HEK293 (cell line): ENCODE measurements at regions of chr6 and their contacts with region 1.

Region 1: DNA sequence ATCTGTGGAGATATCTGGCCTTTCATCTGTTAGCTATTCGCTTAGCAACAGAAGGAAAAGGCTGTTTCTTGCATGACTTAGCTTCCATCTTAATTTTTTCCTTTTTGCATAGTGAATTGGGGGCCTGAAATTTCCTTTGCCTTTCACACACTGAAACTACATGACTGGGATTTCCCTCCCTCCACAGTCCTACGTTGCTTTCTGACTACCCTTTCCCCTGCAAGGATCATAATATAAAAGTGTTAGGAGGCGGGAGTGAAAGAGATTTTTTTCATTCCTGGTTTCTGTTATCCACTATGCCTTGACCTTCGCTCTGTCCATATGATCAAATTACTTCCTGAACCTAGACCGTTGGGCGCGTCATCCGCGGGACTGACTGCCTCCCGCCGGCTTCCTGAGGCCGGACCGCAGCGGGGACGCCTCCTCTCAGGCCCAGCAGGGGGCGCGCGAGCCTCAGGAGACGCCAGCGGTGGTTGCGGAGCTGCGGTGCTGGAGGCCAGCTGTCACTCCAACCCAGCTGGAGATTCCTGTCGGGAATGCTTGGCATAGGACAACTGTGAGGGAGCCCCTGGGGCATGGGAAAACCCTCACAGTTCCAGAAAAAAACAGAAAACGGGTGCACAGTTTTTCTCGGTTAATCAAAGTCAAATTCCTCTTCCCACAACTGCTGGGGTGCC is 55.6 kb downstream of the MEP1A start:
- H3K4me3 ChIP-seq: no peak overlapping the region
- H3K27ac ChIP-seq: no peak overlapping the region
- H3K4me1 ChIP-seq: peaks cover 3% of the 10 kb centered on the region
- CTCF ChIP-seq: peak; percentile 90

Region 2: GRCh38 chr6:46704562-46704961 is 144.3 kb before region 1 on chr6:
- CTCF ChIA-PET with region 1: interaction called, 21 read pairs
- POLR2A ChIA-PET with region 1: no interaction called
- H3K4me3 ChIP-seq: no peak overlapping the region
- H3K27ac ChIP-seq: no peak overlapping the region
- H3K4me1 ChIP-seq: peaks cover 11% of the 10 kb centered on the region
- CTCF ChIP-seq: peak; percentile 24; the same call in 1 of the 2 replicates

Region 3: DNA sequence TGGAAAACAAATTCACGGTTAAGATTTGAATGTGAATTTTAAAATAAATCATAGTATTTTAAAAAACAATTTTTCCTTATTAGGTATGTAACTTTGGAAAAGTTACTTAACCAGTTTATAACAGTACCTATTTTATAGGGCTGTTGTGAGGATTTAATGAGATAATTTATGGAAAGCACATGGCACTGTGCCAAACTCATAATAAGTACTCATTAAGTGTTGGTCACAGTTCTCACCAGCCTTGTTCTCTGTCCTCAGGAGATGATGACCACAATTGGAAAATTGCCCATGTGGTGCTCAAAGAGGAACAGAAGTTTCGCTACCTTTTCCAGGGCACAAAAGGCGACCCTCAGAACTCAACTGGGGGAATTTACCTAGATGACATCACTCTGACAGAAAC is 16.0 kb before region 1 on chr6:
- CTCF ChIA-PET with region 1: interaction called, 11 read pairs
- POLR2A ChIA-PET with region 1: no interaction called
- H3K4me3 ChIP-seq: no peak overlapping the region
- H3K27ac ChIP-seq: no peak overlapping the region
- H3K4me1 ChIP-seq: no peaks in the 10 kb centered on the region
- CTCF ChIP-seq: no peak

Region 4: GRCh38 chr6:46862381-46862780 is 13.6 kb after region 1 on chr6:
- CTCF ChIA-PET with region 1: interaction called, 21 read pairs
- POLR2A ChIA-PET with region 1: no interaction called
- H3K4me3 ChIP-seq: no peak overlapping the region
- H3K27ac ChIP-seq: no peak overlapping the region
- H3K4me1 ChIP-seq: no peaks in the 10 kb centered on the region
- CTCF ChIP-seq: no peak

Region 5: DNA sequence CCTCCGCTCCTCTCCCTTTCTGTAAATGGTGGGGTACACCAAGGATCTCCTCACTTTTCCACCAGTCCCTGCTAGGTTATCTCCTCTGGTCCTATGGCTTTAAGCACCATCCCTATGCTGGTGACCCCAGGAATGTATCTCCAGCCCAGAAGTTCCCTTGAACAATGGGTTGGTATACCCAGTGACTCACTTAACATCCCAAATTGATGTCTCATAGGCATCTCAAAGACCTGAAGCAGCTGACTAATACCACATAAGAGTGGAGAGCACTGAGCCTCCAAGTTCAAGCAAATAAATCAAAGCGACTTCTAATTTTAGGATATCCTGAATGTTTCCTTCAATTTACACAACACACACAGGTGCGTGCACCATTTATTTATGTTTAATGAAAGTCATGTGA is 145.0 kb after region 1 on chr6:
- CTCF ChIA-PET with region 1: interaction called, 108 read pairs
- POLR2A ChIA-PET with region 1: no interaction called
- H3K4me3 ChIP-seq: no peak overlapping the region
- H3K27ac ChIP-seq: no peak overlapping the region
- H3K4me1 ChIP-seq: peaks cover 7% of the 10 kb centered on the region
- CTCF ChIP-seq: no peak

Region 6: DNA sequence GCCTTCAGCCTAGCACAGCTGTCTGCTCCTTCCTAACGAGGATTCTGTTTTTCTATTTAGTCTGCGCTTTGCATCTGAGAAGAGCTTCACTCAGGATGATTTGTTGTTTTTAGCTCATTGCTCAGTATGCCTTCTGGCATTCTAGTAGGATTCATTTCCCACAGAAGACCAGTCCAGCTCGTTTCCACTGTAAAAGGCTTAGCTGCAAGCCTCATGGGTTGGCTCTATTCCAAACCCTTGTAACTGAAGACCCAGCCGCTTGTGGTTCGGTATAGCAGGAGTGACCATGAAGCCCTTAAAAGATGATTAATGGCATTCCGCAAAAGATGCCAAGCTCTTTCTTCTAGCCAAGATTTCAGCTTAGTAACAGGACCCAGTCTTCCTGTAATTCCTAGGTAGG is 186.1 kb after region 1 on chr6:
- CTCF ChIA-PET with region 1: interaction called, 18 read pairs
- POLR2A ChIA-PET with region 1: no interaction called
- H3K4me3 ChIP-seq: no peak overlapping the region
- H3K27ac ChIP-seq: peak overlapping the region; percentile 72
- H3K4me1 ChIP-seq: peaks cover 18% of the 10 kb centered on the region
- CTCF ChIP-seq: no peak